ENCODE measurements at regions of chr17 and their contacts with region 1.

Region 1: GRCh38 chr17:72725433-72726068 is 366.9 kb downstream of the SLC39A11 start:
- DNase-seq: peak; percentile 42
- CTCF ChIP-seq: peak; percentile 91

Region 2: GRCh38 chr17:72976971-72977770 is 251.6 kb after region 1 on chr17:
- in situ Hi-C with region 1: loop called (anchors 10 kb)
- DNase-seq: no peak
- CTCF ChIP-seq: no peak

Region 3: DNA sequence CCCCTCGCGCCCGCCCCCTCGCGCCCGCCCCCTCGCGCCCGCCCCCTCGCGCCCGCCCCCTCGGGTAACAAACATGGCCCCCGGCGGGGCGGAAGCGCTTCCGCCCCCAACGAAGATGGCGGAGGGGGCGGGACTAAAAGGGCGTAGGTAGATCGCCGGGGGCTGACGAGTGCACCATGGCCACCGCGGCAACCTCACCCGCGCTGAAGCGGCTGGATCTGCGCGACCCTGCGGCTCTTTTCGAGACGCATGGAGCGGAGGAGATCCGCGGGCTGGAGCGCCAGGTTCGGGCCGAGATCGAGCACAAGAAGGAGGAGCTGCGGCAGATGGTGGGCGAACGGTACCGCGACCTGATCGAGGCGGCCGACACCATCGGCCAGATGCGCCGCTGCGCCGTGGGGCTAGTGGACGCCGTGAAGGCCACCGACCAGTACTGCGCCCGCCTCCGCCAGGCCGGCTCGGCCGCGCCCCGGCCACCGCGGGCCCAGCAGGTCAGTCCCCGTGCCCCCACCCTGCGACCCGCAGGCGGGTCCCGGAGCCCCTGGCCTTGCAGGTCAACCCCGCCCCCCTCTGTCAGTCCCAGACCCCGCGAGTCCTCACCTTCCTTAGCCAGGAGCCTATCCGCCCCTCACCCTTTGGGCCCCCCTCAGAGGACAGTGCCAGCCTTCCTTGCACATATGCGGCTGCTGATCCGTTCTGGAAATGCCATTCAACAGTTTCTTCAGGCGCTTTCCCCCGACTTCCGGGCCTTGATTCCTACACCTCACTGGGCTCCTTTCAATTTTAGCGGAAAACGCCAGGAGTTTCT is 467.5 kb after region 1 on chr17 and contains the start of gene COG1:
- in situ Hi-C with region 1: loop called (anchors 25 kb)
- DNase-seq: peak; percentile 98
- CTCF ChIP-seq: no peak

Region 4: DNA sequence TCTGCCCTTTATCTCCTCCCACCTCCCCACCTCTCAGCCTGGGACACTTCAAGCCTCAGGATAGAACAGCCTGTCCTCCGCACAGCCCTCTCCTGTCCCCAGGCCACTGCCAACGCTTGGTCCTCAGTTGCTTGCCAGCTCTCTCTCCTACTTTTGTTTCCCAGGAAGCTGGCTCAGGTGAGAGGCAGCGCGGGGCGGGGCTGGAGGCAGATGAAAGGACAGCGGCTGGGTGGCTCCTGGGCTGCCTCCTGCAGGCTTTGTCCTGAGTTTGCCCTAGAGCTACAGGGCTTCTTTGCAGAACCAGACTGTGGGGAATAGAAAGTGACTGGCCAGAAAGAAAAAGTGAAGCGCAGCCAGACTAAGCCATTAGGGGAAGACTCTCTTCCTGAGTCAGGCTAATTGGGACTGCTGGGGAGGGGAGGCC is 634.4 kb after region 1 on chr17:
- in situ Hi-C with region 1: loop called (anchors 10 kb)
- DNase-seq: no peak
- CTCF ChIP-seq: no peak

Measured in GM13977 (cell line).